ENCODE measurements at regions of chr11 and their contacts with region 1.

Region 1: DNA sequence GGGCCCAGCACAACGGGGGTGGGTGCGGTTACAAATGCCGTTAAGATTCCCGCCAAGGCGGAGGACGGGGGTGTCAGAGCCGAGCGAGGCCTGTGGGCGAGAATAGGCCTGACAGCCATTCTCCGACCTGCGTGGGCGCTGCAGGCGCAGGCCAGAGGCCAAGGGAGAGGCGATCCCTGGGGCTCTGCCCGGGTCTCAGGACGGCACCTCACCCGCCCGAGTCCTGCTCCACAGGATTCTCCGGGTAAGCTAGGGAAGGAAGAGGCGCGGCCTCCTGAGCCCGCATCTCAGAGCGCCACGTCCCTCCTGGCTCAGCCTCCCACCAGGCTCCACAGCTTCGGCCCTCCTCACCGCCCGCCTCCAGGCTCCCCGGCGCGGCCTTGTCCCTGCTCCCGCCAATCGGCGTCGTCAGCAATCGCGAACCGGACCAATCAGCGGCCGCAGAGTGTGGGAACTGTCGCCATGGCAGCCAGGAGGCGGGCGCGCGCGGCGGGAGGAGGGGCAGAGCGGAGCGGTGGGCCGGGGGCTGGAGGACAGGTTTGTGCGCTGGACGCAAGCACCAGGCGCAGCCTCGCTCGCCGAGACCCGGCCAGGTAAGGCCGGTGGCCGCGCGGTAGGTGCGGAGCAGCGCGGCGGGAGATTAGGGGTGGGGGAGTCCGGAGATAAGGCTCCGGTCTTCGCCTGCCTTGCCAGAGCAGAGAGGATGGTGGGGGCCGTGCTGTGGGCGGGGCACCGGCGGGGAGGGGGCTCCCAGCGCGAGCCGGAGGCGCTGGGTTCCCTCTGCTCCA is at the start of gene NUCB2:
- DNase-seq: peak; percentile 93 to 98 (median 96)
- ATAC-seq: peak; percentile 90 to 93
- H3K4me3 Mint-ChIP-seq: peak within 1 kb of the TSS; percentile 87 to 98 (median 94)
- H3K27ac Mint-ChIP-seq: peak within 1 kb of the TSS; percentile 74 to 99 (median 94)
- H3K4me1 Mint-ChIP-seq: peaks cover 20 to 48% (median 39%) of the 10 kb centered on the region in 4 donors
- H3K27me3 Mint-ChIP-seq: no peaks in the 10 kb centered on the region
- polyA plus RNA-seq, gene NUCB2: 449 to 487 (median 476) TPM

Region 2: DNA sequence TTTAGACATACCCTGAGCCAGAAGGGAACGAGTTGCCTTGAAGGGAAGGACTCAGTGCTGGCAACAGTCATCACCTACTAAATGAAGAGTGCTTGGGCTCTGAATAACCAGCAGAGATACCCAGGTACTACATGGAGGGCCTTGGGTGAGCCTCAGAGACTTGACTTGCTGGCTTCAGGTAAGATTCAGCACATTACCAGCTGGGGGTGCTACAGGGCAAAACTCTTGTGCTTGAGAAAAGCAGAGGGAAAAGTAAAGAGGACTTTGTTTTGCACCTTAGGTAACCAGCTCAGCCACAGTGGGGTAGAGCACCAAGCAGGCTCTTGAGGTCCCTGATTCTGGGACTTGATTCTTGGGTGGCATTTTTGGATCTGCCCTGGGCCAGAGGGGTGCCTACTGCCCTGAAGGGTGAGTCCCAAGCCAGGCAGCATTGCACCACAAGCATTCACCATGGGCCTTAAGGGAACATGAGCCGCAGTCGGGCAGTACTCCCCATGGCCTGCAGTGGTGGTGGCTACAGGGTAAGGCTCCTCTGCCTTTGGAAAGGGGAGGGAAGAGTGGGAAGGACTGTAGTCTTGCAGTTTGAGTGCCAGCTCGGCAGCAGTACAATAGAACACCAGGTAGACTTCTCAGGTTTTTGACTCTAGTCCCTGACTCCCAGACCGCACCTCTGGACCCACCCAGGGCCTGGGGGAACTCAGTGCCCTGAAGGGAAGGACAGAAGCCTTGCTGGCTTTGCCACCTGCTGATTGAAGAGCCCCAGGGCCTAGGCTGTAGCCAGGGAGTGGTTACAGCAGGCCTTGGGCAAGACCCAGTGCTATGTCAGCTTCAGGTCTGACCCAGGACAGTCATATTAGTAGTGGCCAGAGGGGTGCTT is 239.5 kb before region 1 on chr11:
- POLR2A ChIA-PET with region 1: no interaction called
- DNase-seq: no peak
- ATAC-seq: no peak
- H3K4me3 Mint-ChIP-seq: no peak overlapping the region
- H3K27ac Mint-ChIP-seq: no peak overlapping the region
- H3K4me1 Mint-ChIP-seq: no peaks in the 10 kb centered on the region
- H3K27me3 Mint-ChIP-seq: peaks cover 1 to 25% (median 12%) of the 10 kb centered on the region in 5 donors

Region 3: GRCh38 chr11:17077520-17078401 is 198.7 kb before region 1 on chr11 and contains the start of gene RPS13:
- POLR2A ChIA-PET with region 1: interaction called, 13 read pairs
- DNase-seq: peak; percentile 82 to 96 (median 93)
- ATAC-seq: peak; percentile 91 to 95
- H3K4me3 Mint-ChIP-seq: peak within 1 kb of the TSS; percentile 97 to 99 (median 98)
- H3K27ac Mint-ChIP-seq: peak within 1 kb of the TSS; percentile 90 to 99 (median 98)
- H3K4me1 Mint-ChIP-seq: peaks cover 23 to 44% (median 40%) of the 10 kb centered on the region in 4 donors
- H3K27me3 Mint-ChIP-seq: no peaks in the 10 kb centered on the region
- polyA plus RNA-seq, gene RPS13: 2,659 to 3,144 (median 3,037) TPM

Region 4: DNA sequence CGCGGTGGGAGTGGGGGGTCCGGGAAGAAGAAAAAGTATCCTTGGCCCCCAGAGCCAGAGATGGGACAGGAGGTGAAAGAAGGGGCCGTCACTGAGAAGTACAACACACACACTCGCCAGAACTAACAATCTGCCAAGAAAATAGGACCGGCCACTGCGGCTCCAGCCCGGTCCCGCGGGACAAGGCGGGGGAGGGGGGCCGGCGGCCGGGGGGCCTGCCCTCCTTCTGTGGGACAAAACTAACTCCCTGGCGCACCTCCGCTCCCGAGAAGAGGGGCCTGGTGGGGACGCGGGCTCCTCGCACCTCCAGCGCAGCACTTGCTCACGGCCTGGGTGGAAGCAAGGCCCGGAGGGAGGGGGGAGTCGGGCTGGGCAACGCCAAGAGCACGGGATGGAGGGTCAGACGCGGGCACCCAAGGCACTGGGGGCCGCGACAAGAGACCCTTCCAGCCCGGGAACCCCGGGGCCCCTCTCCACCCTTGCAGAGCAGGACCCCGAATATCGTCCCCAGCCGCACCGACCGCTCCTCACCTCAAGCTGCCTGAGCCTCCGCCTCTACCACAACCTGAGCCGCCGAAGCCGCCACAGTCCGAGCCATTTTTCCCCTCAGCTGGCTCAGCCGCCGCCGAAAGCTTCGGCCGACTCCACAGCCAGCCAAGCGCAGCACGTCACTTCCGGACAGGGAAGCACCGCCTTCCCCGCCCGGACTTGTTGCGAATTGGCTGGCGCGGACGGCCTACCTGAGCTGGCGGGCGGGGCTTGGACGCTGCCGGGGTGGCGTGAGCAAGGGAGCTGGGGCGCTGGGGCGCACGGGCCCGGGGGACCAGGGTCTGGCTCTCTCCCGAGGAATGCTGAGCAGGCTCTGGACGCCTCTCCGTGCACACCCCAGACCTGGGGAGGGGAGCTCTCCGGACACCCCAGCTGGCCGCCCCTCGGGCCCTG is 68.8 kb before region 1 on chr11 and contains the start of gene PIK3C2A:
- POLR2A ChIA-PET with region 1: interaction called, 15 read pairs
- DNase-seq: peak; percentile 85 to 96 (median 92)
- ATAC-seq: peak; percentile 95 to 96
- H3K4me3 Mint-ChIP-seq: peak within 1 kb of the TSS; percentile 89 to 100 (median 98)
- H3K27ac Mint-ChIP-seq: peak within 1 kb of the TSS; percentile 94 to 99 (median 99)
- H3K4me1 Mint-ChIP-seq: peaks cover 23 to 58% (median 45%) of the 10 kb centered on the region in 4 donors
- H3K27me3 Mint-ChIP-seq: no peaks in the 10 kb centered on the region
- polyA plus RNA-seq, gene PIK3C2A: 7.0 to 9.8 (median 8.3) TPM

Region 5: DNA sequence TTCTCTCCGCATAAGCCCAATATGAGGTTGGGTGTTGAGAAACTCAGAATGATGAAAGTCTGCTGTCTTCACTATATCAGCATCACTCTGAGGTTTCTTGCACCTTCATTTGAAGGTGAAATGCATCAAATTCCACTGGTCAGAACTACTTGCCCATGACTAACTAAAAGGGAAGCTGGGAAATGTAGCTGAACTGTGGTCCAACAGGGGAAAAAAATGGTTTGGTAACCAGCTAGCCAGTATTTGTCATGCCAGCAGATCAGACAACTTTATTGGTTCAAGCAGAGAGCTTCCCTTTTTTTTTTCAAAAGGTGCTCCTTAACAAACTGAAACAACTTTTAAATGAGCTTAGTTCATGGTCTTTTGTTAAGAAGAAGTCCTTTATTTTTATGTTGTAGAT is 54.5 kb before region 1 on chr11:
- POLR2A ChIA-PET with region 1: no interaction called
- DNase-seq: no peak
- ATAC-seq: no peak
- H3K4me3 Mint-ChIP-seq: no peak overlapping the region
- H3K27ac Mint-ChIP-seq: no peak overlapping the region
- H3K4me1 Mint-ChIP-seq: peaks cover 0 to 2% (median 0%) of the 10 kb centered on the region in 4 donors
- H3K27me3 Mint-ChIP-seq: no peaks in the 10 kb centered on the region

Region 6: DNA sequence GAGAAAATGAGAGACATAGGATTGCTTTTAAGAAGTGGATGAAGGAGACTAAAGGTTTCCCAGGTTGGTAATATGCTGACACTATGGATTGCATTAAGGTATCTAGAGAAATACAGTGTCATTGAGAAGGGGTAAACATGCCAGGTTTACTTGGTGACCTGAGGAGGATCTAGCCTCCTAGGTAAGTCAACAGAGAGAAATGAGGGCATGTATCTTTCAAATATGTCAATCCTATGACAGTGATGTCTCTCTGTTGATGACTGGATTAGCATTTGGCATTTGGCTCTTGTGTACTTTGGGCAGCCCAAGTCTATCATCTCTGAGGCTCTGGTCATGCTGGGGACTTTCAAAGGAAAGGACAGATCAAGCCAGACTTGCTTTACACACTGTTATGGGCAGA is 37.2 kb before region 1 on chr11:
- POLR2A ChIA-PET with region 1: no interaction called
- DNase-seq: no peak
- ATAC-seq: no peak
- H3K4me3 Mint-ChIP-seq: no peak overlapping the region
- H3K27ac Mint-ChIP-seq: peak overlapping the region in 3 of 10 donors; percentile 20 to 54 (median 24)
- H3K4me1 Mint-ChIP-seq: peaks cover 3 to 16% (median 8%) of the 10 kb centered on the region in 4 donors
- H3K27me3 Mint-ChIP-seq: peaks cover 0 to 1% (median 0%) of the 10 kb centered on the region in 5 donors

Region 7: GRCh38 chr11:17287058-17287457 is 10.6 kb after region 1 on chr11:
- POLR2A ChIA-PET with region 1: interaction called, 70 read pairs
- DNase-seq: peak in 4 of 10 donors; percentile 29 to 47 (median 36)
- ATAC-seq: peak; percentile 27 to 42
- H3K4me3 Mint-ChIP-seq: peak overlapping the region in 9 of 10 donors; percentile 19 to 74 (median 68)
- H3K27ac Mint-ChIP-seq: peak overlapping the region; percentile 79 to 96 (median 92)
- H3K4me1 Mint-ChIP-seq: peaks cover 20 to 73% (median 64%) of the 10 kb centered on the region in 4 donors
- H3K27me3 Mint-ChIP-seq: peaks cover 0 to 1% (median 0%) of the 10 kb centered on the region in 5 donors

Region 8: DNA sequence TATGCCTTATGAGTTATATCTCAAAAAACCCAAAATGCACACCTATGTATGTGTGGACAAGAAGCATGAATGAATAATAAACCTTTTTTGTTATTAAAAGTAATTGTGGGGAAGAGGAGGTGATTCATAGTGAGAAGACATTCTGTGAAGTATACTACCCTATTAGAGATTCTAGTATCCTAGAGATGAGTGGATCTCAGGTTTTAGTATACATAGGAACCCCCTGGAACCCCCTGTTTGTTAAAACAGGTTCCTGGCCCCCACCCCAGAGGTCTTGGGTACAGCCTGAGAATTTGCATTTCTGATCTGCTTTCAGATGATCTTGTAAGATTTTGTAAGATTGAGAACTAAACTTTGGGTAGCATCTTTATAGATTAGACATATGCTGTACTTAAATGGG is 17.6 kb after region 1 on chr11:
- POLR2A ChIA-PET with region 1: interaction called, 25 read pairs
- DNase-seq: no peak
- ATAC-seq: no peak
- H3K4me3 Mint-ChIP-seq: no peak overlapping the region
- H3K27ac Mint-ChIP-seq: peak overlapping the region in 8 of 10 donors; percentile 9 to 80 (median 68)
- H3K4me1 Mint-ChIP-seq: peaks cover 20 to 64% (median 59%) of the 10 kb centered on the region in 4 donors
- H3K27me3 Mint-ChIP-seq: no peaks in the 10 kb centered on the region

Region 9: DNA sequence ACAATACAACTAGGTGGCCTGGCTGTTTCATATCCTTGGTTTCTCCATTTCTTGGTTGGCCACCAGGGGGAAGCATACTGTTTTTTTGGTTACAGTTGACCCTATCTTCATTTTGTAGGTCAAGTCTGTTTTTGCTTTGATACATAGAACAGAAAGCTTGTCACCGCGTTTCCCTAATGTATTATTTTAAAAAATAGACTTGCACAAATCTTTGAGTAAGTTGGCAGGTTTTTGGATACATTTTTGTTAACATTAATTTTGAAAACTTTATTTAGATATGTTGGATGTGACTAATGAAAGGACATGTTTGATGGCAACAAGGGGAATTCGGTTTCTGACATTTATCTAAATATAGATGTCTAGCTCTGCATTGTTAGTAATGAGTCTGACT is 78.2 kb after region 1 on chr11:
- POLR2A ChIA-PET with region 1: interaction called, 17 read pairs
- DNase-seq: peak in 9 of 10 donors; percentile 26 to 77 (median 56)
- ATAC-seq: no peak
- H3K4me3 Mint-ChIP-seq: peak overlapping the region; percentile 80 to 99 (median 95)
- H3K27ac Mint-ChIP-seq: peak overlapping the region in 8 of 10 donors; percentile 8 to 90 (median 77)
- H3K4me1 Mint-ChIP-seq: peaks cover 13 to 33% (median 29%) of the 10 kb centered on the region in 4 donors
- H3K27me3 Mint-ChIP-seq: no peaks in the 10 kb centered on the region